Dorsolateral prefrontal cortex (tissue), 120 donors: ENCODE measurements at regions of chr4 and their contacts with region 1.

Region 1: GRCh38 chr4:139403462-139403861 is 50.5 kb upstream of the RAB33B start:
- DNase-seq: no peak
- H3K4me3 ChIP-seq: no peak overlapping the region
- H3K27ac ChIP-seq: peak overlapping the region in 16 of 59 donors; percentile 7 to 70 (median 24)
- H3K27me3 ChIP-seq: no peaks in the 10 kb centered on the region
- CTCF ChIP-seq: peak in 32 of 56 donors; percentile 11 to 46 (median 26)

Region 2: DNA sequence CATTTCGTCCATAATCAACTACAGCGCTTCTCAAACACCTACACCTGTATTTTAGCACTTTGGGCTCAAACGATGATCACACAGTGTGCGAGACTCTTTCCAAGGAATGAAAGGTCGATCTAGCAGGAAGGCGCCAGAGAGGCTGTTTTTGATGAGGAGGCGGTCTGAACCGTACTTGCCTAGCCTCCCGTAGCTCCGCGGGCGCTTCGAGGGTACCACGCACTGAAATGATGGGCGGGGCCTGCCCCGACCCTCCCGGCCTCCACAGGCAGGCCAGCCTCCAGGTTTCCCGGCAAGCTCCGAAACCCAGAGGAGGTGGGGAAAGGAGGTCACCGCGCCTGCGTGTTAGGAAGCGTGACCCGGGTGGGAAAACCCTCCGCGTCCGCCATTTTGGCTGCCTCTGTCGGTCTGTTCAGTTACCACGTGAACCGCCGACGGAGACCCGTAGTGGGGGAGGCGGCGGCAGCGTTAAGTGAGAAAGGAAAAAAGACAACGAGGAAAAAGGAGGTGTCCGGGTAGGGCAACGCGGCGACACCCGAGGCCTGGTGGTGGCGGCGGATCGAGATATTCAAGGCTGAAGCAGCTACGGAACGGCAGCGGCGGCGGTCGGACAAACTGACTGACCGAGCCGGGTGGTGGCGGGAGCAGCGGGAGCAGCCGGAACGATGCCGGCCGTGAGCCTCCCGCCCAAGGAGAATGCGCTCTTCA is 102.2 kb before region 1 on chr4 and contains the start of gene NAA15:
- intact Hi-C with region 1: loop called in 1 of 2 experiments (anchors 10 kb)
- DNase-seq: peak; percentile 95 to 98 (median 96)
- H3K4me3 ChIP-seq: peak within 1 kb of the TSS; percentile 63 to 100 (median 95)
- H3K27ac ChIP-seq: peak within 1 kb of the TSS; percentile 40 to 96 (median 90)
- H3K27me3 ChIP-seq: no peaks in the 10 kb centered on the region
- CTCF ChIP-seq: peak in 42 of 56 donors; percentile 5 to 66 (median 34)
- total RNA-seq, gene NAA15: 28.2 to 47.1 (median 37.9) TPM

Region 3: DNA sequence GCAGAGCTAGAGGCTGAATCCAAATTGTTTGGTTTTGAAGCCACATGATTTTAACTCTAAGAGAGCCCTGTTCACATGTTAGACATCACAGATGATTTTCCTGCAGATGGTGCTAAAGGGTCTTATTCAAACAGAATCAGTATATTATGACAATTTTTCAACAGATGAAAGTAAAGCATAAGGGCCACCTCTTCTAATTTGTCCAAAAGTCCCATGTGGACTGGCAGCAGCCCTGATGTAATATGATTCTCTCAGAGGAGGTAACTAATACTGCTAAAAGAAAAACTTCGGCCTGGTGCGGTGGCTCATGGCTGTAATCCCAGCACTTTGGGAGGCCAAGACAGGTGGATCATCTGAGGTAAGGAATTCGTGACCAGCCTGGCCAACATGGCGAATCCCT is 178.6 kb after region 1 on chr4:
- intact Hi-C with region 1: no loop called
- DNase-seq: no peak
- H3K4me3 ChIP-seq: no peak overlapping the region
- H3K27ac ChIP-seq: no peak overlapping the region
- H3K27me3 ChIP-seq: no peaks in the 10 kb centered on the region
- CTCF ChIP-seq: peak in 2 of 56 donors; percentile 19 to 20